K562 (cell line): ENCODE measurements at regions of chr4 and their contacts with region 1.

Region 1: GRCh38 chr4:186904101-186904500 is 180.4 kb upstream of the FAT1 start:
- DNase-seq: no peak
- ATAC-seq: no peak
- H3K4me3 ChIP-seq: no peak overlapping the region
- H3K27ac ChIP-seq: no peak overlapping the region
- H3K4me1 ChIP-seq: peaks cover 5 to 12% of the 10 kb centered on the region in 2 experiments; a peak in 3 of 5 replicates
- H3K27me3 ChIP-seq: peaks cover 0 to 4% of the 10 kb centered on the region in 2 experiments; a peak in 1 of 5 replicates
- CTCF ChIP-seq: no peak
- EP300 ChIP-seq: no peak
- POLR2A ChIP-seq: no peak
- RAD21 ChIP-seq: no peak

Region 2: GRCh38 chr4:186749611-186750281 is 154.4 kb before region 1 on chr4:
- CTCF ChIA-PET with region 1: no interaction called
- POLR2A ChIA-PET with region 1: no interaction called
- in situ Hi-C with region 1: no loop called
- intact Hi-C with region 1: loop called (anchors 5 kb)
- DNase-seq: no peak
- ATAC-seq: no peak; the same call in 1 of the 3 replicates
- H3K4me3 ChIP-seq: no peak overlapping the region
- H3K27ac ChIP-seq: no peak overlapping the region
- H3K4me1 ChIP-seq: no peaks in the 10 kb centered on the region; a peak in 1 of 5 replicates
- H3K27me3 ChIP-seq: peaks cover 2 to 12% of the 10 kb centered on the region in 2 experiments; a peak in 3 of 5 replicates
- CTCF ChIP-seq: no peak
- EP300 ChIP-seq: no peak
- POLR2A ChIP-seq: no peak
- RAD21 ChIP-seq: no peak

Region 3: GRCh38 chr4:186920483-186920882 is 16.4 kb after region 1 on chr4:
- CTCF ChIA-PET with region 1: no interaction called
- POLR2A ChIA-PET with region 1: no interaction called
- in situ Hi-C with region 1: no loop called
- intact Hi-C with region 1: no loop called
- DNase-seq: no peak
- ATAC-seq: no peak
- H3K4me3 ChIP-seq: no peak overlapping the region
- H3K27ac ChIP-seq: no peak overlapping the region
- H3K4me1 ChIP-seq: no peaks in the 10 kb centered on the region
- H3K27me3 ChIP-seq: peaks cover 3 to 8% of the 10 kb centered on the region in 2 experiments; a peak in 4 of 5 replicates
- CTCF ChIP-seq: no peak
- EP300 ChIP-seq: no peak
- POLR2A ChIP-seq: no peak
- RAD21 ChIP-seq: no peak